HCT116 (cell line): ENCODE measurements at regions of chr5 and their contacts with region 1.

Region 1: GRCh38 chr5:138752951-138753793 is at the start of gene CTNNA1:
- DNase-seq: peak; percentile 71
- ATAC-seq: peak; percentile 74
- H3K4me3 ChIP-seq: peak within 1 kb of the TSS; percentile 82 to 95
- H3K27ac ChIP-seq: peak within 1 kb of the TSS; percentile 98
- H3K4me1 ChIP-seq: peaks cover 29 to 50% of the 10 kb centered on the region in 2 experiments
- H3K27me3 ChIP-seq: no peaks in the 10 kb centered on the region
- CTCF ChIP-seq: no peak
- POLR2A ChIP-seq: peak; percentile 47
- RAD21 ChIP-seq: no peak
- total RNA-seq, gene CTNNA1: 313 TPM

Region 2: DNA sequence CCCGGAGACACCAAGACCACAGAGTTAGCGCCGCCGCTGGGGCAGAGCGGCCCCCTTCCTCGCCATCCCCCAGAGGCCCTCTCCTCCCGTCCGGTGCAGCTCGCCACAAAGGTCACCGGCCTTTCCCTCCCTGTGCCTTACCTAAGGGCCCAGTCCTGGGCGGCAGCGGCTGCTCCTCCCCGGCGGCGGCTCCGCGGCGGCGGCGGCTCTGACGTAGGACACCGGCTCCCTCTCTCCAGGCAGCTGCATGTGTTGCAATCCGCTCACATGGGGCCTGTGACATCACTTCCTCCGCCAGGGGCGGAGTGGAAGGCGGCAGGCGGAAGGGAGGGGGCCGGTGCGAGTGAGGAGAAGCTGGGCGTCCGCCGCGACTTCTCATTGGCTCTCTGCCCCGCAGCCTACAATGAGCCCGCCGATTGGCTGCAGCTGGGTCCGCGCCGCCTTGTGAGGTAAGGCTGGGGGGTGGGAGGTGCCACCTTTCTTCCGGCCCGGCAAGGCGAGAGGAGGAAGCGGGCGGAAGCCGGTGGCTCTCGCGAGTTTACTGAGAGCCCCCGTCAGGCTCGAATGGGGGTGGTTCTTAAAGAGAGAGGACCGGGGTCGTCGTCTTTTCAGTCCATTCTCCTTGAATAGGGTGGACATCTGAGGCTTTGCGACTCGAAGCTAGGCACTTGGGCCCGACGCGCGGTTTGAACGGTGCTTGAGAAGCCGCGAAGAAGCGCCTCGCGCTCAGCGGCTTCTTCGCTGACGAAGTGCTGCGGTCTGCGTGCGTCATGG is 210.0 kb before region 1 on chr5 and contains the start of gene ETF1:
- CTCF ChIA-PET with region 1: no interaction called
- POLR2A ChIA-PET with region 1: no interaction called
- RAD21 ChIA-PET with region 1: no interaction called
- intact Hi-C with region 1: no loop called
- DNase-seq: peak; percentile 97
- ATAC-seq: peak; percentile 88
- H3K4me3 ChIP-seq: peak within 1 kb of the TSS; percentile 84 to 97
- H3K27ac ChIP-seq: peak within 1 kb of the TSS; percentile 78
- H3K4me1 ChIP-seq: peaks cover 19 to 50% of the 10 kb centered on the region in 2 experiments; a peak in 3 of 4 replicates
- H3K27me3 ChIP-seq: no peaks in the 10 kb centered on the region
- CTCF ChIP-seq: no peak
- POLR2A ChIP-seq: peak; percentile 18
- RAD21 ChIP-seq: no peak
- total RNA-seq, gene ETF1: 178 TPM

Region 3: DNA sequence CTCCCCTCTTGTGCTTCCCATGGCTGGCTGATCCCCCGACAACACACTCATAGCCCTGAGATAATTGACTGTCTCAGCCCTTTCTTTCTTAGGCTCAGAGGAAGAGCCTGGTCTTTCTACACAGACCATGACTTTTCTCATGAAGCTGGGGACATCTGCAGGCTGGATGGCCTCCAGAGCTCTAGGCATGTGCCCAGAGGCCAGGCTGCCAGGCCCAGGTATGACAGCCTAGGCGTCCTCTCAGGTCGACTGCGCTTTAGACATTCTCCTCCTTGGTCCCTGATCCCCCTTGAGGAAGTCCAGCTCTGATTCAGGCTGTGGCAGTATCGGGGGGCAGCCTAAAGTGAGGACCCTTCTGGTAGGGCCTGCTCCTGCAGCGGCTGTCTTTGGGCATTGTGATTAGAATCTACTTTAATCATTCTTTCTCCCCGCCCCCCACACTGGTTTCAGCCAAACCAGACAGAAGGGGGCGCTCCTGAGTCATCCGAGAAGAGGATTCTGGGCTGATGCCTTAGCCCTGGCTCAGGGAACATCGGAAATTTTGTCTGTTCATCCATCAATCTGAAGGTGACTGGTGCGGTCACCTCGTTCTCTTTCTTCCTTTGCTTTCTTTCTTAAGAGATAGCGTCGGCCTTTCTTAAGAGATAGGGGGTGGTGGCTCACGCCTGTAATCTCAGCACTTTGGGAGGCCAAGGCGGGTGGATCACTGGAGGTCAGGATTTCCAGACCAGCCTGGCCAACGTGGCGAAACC is 111.4 kb before region 1 on chr5:
- CTCF ChIA-PET with region 1: no interaction called
- POLR2A ChIA-PET with region 1: no interaction called
- RAD21 ChIA-PET with region 1: no interaction called
- intact Hi-C with region 1: loop called (anchors 1 kb)
- DNase-seq: peak; percentile 48
- ATAC-seq: peak; percentile 96
- H3K4me3 ChIP-seq: no peak overlapping the region
- H3K27ac ChIP-seq: no peak overlapping the region
- H3K4me1 ChIP-seq: peaks cover 3 to 8% of the 10 kb centered on the region in 2 experiments; a peak in 3 of 4 replicates
- H3K27me3 ChIP-seq: no peaks in the 10 kb centered on the region
- CTCF ChIP-seq: peak; percentile 88 to 95 (median 94)
- POLR2A ChIP-seq: no peak
- RAD21 ChIP-seq: peak; percentile 95

Region 4: GRCh38 chr5:138686668-138687067 is 66.5 kb before region 1 on chr5:
- CTCF ChIA-PET with region 1: no interaction called
- POLR2A ChIA-PET with region 1: no interaction called
- RAD21 ChIA-PET with region 1: no interaction called
- intact Hi-C with region 1: loop called (anchors 10 kb)
- DNase-seq: no peak
- ATAC-seq: no peak
- H3K4me3 ChIP-seq: no peak overlapping the region
- H3K27ac ChIP-seq: no peak overlapping the region
- H3K4me1 ChIP-seq: no peaks in the 10 kb centered on the region
- H3K27me3 ChIP-seq: no peaks in the 10 kb centered on the region; the same call in 1 of the 2 replicates
- CTCF ChIP-seq: no peak
- POLR2A ChIP-seq: no peak
- RAD21 ChIP-seq: no peak

Region 5: GRCh38 chr5:138725138-138725833 is 27.9 kb before region 1 on chr5:
- CTCF ChIA-PET with region 1: interaction called, 10 read pairs
- POLR2A ChIA-PET with region 1: interaction called, 5 read pairs
- RAD21 ChIA-PET with region 1: interaction called in 1 of 2 experiments, 3 read pairs
- intact Hi-C with region 1: loop called (anchors 1 kb)
- DNase-seq: peak; percentile 86
- ATAC-seq: peak; percentile 99
- H3K4me3 ChIP-seq: peak overlapping the region in 1 of 2 experiments; percentile 28; a peak in 2 of 4 replicates
- H3K27ac ChIP-seq: peak overlapping the region; percentile 69
- H3K4me1 ChIP-seq: peaks cover 19 to 22% of the 10 kb centered on the region in 2 experiments
- H3K27me3 ChIP-seq: no peaks in the 10 kb centered on the region
- CTCF ChIP-seq: peak; percentile 65 to 74 (median 71); a peak in 5 of 6 replicates
- POLR2A ChIP-seq: no peak
- RAD21 ChIP-seq: peak; percentile 78

Region 6: GRCh38 chr5:139120521-139120920 is 367.3 kb after region 1 on chr5:
- CTCF ChIA-PET with region 1: no interaction called
- POLR2A ChIA-PET with region 1: no interaction called
- RAD21 ChIA-PET with region 1: no interaction called
- intact Hi-C with region 1: no loop called
- DNase-seq: no peak
- ATAC-seq: no peak
- H3K4me3 ChIP-seq: no peak overlapping the region
- H3K27ac ChIP-seq: no peak overlapping the region
- H3K4me1 ChIP-seq: no peaks in the 10 kb centered on the region
- H3K27me3 ChIP-seq: no peaks in the 10 kb centered on the region
- CTCF ChIP-seq: no peak
- POLR2A ChIP-seq: no peak
- RAD21 ChIP-seq: no peak

Region 7: GRCh38 chr5:139262742-139263445 is 509.7 kb after region 1 on chr5:
- CTCF ChIA-PET with region 1: no interaction called
- POLR2A ChIA-PET with region 1: no interaction called
- RAD21 ChIA-PET with region 1: no interaction called
- intact Hi-C with region 1: loop called (anchors 10 kb)
- DNase-seq: peak; percentile 83
- ATAC-seq: peak; percentile 99
- H3K4me3 ChIP-seq: no peak overlapping the region
- H3K27ac ChIP-seq: no peak overlapping the region
- H3K4me1 ChIP-seq: peaks cover 0 to 11% of the 10 kb centered on the region in 2 experiments; a peak in 3 of 4 replicates
- H3K27me3 ChIP-seq: no peaks in the 10 kb centered on the region
- CTCF ChIP-seq: peak; percentile 85 to 94 (median 86)
- POLR2A ChIP-seq: no peak
- RAD21 ChIP-seq: peak; percentile 99